SK-N-SH (cell line): ENCODE measurements at regions of chr7 and their contacts with region 1.

Region 1: GRCh38 chr7:141072548-141073172 is 1.2 kb upstream of the TMEM178B start:
- DNase-seq: peak; percentile 84
- H3K4me3 ChIP-seq: peak overlapping the region; percentile 63 to 64
- H3K27ac ChIP-seq: peak overlapping the region in 1 of 2 experiments; percentile 67; a peak in 1 of 4 replicates
- H3K4me1 ChIP-seq: peaks cover 4 to 28% of the 10 kb centered on the region in 2 experiments; a peak in 2 of 4 replicates
- H3K27me3 ChIP-seq: peaks cover 38% of the 10 kb centered on the region
- CTCF ChIP-seq: no peak
- EP300 ChIP-seq: no peak
- RAD21 ChIP-seq: peak; percentile 13; the same call in 1 of the 2 replicates

Region 2: DNA sequence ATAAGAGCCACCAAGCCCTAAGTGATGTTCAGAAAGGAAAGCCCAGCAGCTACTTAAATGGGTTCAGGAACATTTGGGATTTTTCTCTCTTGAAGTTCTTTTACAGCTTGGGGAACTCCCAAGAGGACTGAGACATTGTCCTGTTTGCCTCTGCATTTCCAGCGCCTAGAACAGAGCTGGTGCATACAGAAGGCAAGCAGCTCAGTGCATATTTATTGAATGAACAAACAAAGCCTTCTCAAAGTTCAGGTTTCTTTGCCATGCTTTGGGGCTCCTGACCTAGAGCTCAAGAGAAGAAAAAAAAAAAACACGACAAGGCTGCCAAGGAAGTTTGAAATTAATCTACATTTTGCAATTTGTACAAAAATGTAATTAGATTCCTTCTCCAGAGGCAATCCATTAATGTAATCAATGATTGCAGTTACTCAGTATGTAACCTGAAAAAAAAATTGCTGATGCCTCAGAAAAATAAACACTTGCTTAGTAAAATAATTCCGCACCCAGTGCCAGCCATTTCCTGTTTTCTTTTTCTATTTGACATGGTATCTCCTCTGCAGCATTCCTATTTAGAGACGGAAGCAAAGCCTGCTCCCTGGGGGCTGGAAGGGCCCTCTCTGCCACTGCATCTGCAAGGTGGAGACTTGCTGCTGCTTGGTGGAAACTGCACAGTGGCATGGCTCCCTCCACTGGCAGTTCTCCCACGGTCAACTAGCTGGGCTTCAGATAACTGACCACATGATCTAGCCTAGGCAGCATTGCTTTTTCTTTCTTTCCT is 158.5 kb after region 1 on chr7:
- CTCF ChIA-PET with region 1: interaction called, 27 read pairs
- POLR2A ChIA-PET with region 1: interaction called, 3 read pairs
- DNase-seq: peak; percentile 72
- H3K4me3 ChIP-seq: no peak overlapping the region
- H3K27ac ChIP-seq: no peak overlapping the region
- H3K4me1 ChIP-seq: peaks cover 0 to 6% of the 10 kb centered on the region in 2 experiments; a peak in 2 of 4 replicates
- H3K27me3 ChIP-seq: no peaks in the 10 kb centered on the region
- CTCF ChIP-seq: no peak
- EP300 ChIP-seq: no peak
- RAD21 ChIP-seq: peak; percentile 86

Region 3: GRCh38 chr7:141430455-141431137 is 357.9 kb after region 1 on chr7:
- CTCF ChIA-PET with region 1: no interaction called
- POLR2A ChIA-PET with region 1: no interaction called
- DNase-seq: no peak
- H3K4me3 ChIP-seq: no peak overlapping the region
- H3K27ac ChIP-seq: no peak overlapping the region
- H3K4me1 ChIP-seq: no peaks in the 10 kb centered on the region; a peak in 1 of 4 replicates
- H3K27me3 ChIP-seq: no peaks in the 10 kb centered on the region
- CTCF ChIP-seq: no peak
- EP300 ChIP-seq: no peak
- RAD21 ChIP-seq: no peak

Region 4: GRCh38 chr7:141551094-141551781 is 478.6 kb after region 1 on chr7 and contains the start of gene AGK:
- CTCF ChIA-PET with region 1: interaction called, 14 read pairs
- POLR2A ChIA-PET with region 1: interaction called, 3 read pairs
- DNase-seq: peak; percentile 98
- H3K4me3 ChIP-seq: peak within 1 kb of the TSS; percentile 76 to 84
- H3K27ac ChIP-seq: peak within 1 kb of the TSS; percentile 25 to 84; a peak in 3 of 4 replicates
- H3K4me1 ChIP-seq: peaks cover 0 to 16% of the 10 kb centered on the region in 2 experiments; a peak in 3 of 4 replicates
- H3K27me3 ChIP-seq: no peaks in the 10 kb centered on the region
- CTCF ChIP-seq: no peak
- EP300 ChIP-seq: peak in 1 of 2 experiments; percentile 42; a peak in 1 of 4 replicates
- RAD21 ChIP-seq: no peak
- polyA plus RNA-seq, gene AGK: 45.7 and 67.0 TPM in 2 replicates